ENCODE measurements at regions of chr21 and their contacts with region 1.

Region 1: GRCh38 chr21:42695697-42696380 is 42.4 kb downstream of the PDE9A start:
- DNase-seq: peak in 1 of 3 donors; percentile 43
- ATAC-seq: peak; percentile 56 to 62
- H3K4me3 ChIP-seq: no peak overlapping the region
- H3K27ac ChIP-seq: no peak overlapping the region
- H3K4me1 ChIP-seq: peaks cover 5% of the 10 kb centered on the region
- H3K27me3 ChIP-seq: no peaks in the 10 kb centered on the region

Region 2: GRCh38 chr21:42754270-42754933 is 58.6 kb after region 1 on chr21:
- intact Hi-C with region 1: loop called in 1 of 4 experiments (anchors 10 kb)
- DNase-seq: no peak
- ATAC-seq: peak in 1 of 2 donors; percentile 43
- H3K4me3 ChIP-seq: no peak overlapping the region
- H3K27ac ChIP-seq: no peak overlapping the region
- H3K4me1 ChIP-seq: no peaks in the 10 kb centered on the region
- H3K27me3 ChIP-seq: no peaks in the 10 kb centered on the region

Measured in right cardiac atrium (tissue), 5 donors.